GM12878 (cell line): ENCODE measurements at regions of chr16 and their contacts with region 1.

Region 1: DNA sequence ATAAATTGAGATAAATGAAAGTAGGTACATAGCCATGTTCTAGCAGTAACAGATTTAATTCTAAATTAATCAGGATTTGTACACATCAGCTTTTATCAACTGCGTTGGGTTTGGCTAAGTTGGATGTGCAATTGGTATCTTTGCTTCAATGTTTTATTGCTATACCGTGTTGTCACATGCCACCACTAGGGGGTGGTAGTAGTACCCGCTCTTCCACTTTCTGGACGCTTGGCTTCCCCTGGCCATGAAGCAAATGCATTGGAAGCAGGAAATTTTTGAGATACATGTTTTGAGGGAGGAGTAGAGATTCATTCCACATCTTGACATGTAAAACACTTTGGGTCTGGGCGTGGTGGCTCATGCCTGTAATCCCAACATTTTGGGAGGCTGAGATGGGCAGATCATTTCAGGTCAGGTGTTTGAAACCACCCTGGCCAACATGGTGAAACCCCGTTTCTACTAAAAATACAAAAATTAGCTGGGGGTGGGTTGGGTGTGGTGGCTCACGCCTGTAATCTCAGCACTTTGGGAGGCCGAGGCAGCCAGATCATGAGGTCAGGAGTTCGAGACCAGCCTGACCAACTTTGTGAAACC is 58.6 kb downstream of the EMP2 start:
- DNase-seq: no peak
- ATAC-seq: peak; percentile 91
- H3K4me3 ChIP-seq: no peak overlapping the region
- H3K27ac ChIP-seq: no peak overlapping the region
- H3K4me1 ChIP-seq: no peaks in the 10 kb centered on the region
- H3K27me3 ChIP-seq: no peaks in the 10 kb centered on the region
- CTCF ChIP-seq: peak; percentile 78 to 86 (median 81)
- EP300 ChIP-seq: no peak
- POLR2A ChIP-seq: no peak
- RAD21 ChIP-seq: peak; percentile 81

Region 2: GRCh38 chr16:10485698-10486382 is 35.9 kb before region 1 on chr16:
- CTCF ChIA-PET with region 1: no interaction called
- POLR2A ChIA-PET with region 1: no interaction called
- RAD21 ChIA-PET with region 1: no interaction called
- SMC1A ChIA-PET with region 1: no interaction called
- in situ Hi-C with region 1: no loop called
- intact Hi-C with region 1: no loop called
- DNase-seq: no peak
- ATAC-seq: no peak
- H3K4me3 ChIP-seq: no peak overlapping the region
- H3K27ac ChIP-seq: no peak overlapping the region
- H3K4me1 ChIP-seq: no peaks in the 10 kb centered on the region
- H3K27me3 ChIP-seq: no peaks in the 10 kb centered on the region
- CTCF ChIP-seq: no peak
- EP300 ChIP-seq: no peak
- POLR2A ChIP-seq: no peak
- RAD21 ChIP-seq: no peak

Region 3: GRCh38 chr16:10552998-10553491 is 31.3 kb after region 1 on chr16:
- CTCF ChIA-PET with region 1: interaction called, 3 read pairs
- POLR2A ChIA-PET with region 1: no interaction called
- RAD21 ChIA-PET with region 1: no interaction called
- SMC1A ChIA-PET with region 1: interaction called, 11 read pairs
- in situ Hi-C with region 1: no loop called
- intact Hi-C with region 1: no loop called
- DNase-seq: peak; percentile 49
- ATAC-seq: peak; percentile 99
- H3K4me3 ChIP-seq: peak overlapping the region; percentile 49; the same call in 1 of the 2 replicates
- H3K27ac ChIP-seq: peak overlapping the region; percentile 60
- H3K4me1 ChIP-seq: peaks cover 7% of the 10 kb centered on the region
- H3K27me3 ChIP-seq: no peaks in the 10 kb centered on the region; a peak in 1 of 4 replicates
- CTCF ChIP-seq: no peak
- EP300 ChIP-seq: no peak
- POLR2A ChIP-seq: 0 out of 2 replicates have a peak, but pooled peaks have one; percentile 50
- RAD21 ChIP-seq: no peak

Region 4: DNA sequence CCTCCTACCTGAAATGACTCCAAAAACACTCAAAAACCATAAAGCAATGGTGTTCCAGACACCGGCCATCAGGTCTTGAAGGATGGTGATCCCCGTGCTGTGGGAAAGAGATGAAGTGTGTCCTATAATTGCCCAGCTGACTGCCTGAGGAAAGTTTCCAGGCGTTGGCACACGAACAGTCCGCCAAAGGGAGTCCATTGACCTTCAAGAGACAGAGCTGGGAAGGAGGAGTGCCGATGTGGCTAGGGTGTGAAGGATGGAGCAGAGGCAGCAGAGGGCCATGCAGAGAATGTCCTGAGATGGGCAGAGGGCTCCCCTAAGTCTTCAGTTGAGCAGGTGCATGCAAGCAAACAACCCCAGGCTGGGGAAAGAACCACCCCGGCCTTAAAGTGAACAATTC is 210.0 kb after region 1 on chr16:
- CTCF ChIA-PET with region 1: interaction called, 191 read pairs
- POLR2A ChIA-PET with region 1: no interaction called
- RAD21 ChIA-PET with region 1: interaction called, 85 read pairs
- SMC1A ChIA-PET with region 1: interaction called, 104 read pairs
- in situ Hi-C with region 1: no loop called
- intact Hi-C with region 1: no loop called
- DNase-seq: no peak
- ATAC-seq: no peak
- H3K4me3 ChIP-seq: no peak overlapping the region
- H3K27ac ChIP-seq: no peak overlapping the region
- H3K4me1 ChIP-seq: no peaks in the 10 kb centered on the region
- H3K27me3 ChIP-seq: no peaks in the 10 kb centered on the region
- CTCF ChIP-seq: no peak
- EP300 ChIP-seq: no peak
- POLR2A ChIP-seq: no peak
- RAD21 ChIP-seq: no peak

Region 5: DNA sequence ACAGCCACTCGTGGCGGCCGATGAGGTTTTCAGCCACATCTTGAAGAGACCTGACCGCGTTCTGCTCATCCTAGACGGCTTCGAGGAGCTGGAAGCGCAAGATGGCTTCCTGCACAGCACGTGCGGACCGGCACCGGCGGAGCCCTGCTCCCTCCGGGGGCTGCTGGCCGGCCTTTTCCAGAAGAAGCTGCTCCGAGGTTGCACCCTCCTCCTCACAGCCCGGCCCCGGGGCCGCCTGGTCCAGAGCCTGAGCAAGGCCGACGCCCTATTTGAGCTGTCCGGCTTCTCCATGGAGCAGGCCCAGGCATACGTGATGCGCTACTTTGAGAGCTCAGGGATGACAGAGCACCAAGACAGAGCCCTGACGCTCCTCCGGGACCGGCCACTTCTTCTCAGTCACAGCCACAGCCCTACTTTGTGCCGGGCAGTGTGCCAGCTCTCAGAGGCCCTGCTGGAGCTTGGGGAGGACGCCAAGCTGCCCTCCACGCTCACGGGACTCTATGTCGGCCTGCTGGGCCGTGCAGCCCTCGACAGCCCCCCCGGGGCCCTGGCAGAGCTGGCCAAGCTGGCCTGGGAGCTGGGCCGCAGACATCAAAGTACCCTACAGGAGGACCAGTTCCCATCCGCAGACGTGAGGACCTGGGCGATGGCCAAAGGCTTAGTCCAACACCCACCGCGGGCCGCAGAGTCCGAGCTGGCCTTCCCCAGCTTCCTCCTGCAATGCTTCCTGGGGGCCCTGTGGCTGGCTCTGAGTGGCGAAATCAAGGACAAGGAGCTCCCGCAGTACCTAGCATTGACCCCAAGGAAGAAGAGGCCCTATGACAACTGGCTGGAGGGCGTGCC is 385.4 kb after region 1 on chr16:
- CTCF ChIA-PET with region 1: no interaction called
- POLR2A ChIA-PET with region 1: interaction called, 4 read pairs
- RAD21 ChIA-PET with region 1: interaction called, 3 read pairs
- SMC1A ChIA-PET with region 1: no interaction called
- in situ Hi-C with region 1: loop called (anchors 5 kb)
- intact Hi-C with region 1: no loop called
- DNase-seq: no peak
- ATAC-seq: no peak
- H3K4me3 ChIP-seq: no peak overlapping the region
- H3K27ac ChIP-seq: no peak overlapping the region
- H3K4me1 ChIP-seq: peaks cover 7% of the 10 kb centered on the region
- H3K27me3 ChIP-seq: no peaks in the 10 kb centered on the region
- CTCF ChIP-seq: no peak
- EP300 ChIP-seq: no peak
- POLR2A ChIP-seq: no peak
- RAD21 ChIP-seq: no peak

Region 6: DNA sequence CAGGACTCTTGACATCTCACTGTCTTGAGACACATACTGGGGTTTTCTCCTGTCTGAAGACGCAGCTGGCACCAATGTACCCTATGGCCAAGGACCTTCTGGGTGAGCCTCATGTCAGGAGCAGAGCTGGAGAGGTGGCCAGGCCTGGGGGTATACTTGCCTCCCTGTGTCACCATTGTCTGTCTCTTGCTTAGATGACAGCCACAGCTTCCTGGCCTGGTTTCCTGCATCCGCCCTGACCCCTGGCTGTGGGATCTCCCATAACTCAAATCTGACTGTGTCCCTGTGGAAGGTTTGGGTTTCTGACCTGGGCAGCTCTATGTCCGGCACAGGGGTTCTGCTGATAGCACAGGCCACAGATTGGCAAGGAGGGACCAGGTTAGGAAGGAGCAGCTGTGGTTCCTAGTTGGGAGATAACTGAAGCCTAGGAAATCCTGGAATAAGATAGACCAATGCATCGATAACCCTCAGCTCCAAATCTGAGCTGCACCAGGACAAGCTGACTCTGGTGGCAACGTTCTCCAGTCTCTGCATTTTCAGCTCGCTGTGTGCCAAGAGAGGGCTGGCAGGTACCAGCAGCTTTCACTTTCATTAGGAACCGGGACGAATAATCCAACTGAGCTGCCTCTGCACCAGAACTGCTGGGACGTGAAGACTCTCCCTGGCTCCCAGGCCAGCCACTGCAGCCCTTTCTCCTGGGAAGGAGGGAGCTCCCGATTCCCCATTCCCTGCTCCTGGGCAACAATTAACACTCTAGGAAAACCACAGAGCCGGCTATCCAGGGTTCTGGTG is 415.5 kb after region 1 on chr16:
- CTCF ChIA-PET with region 1: no interaction called
- POLR2A ChIA-PET with region 1: no interaction called
- RAD21 ChIA-PET with region 1: interaction called, 3 read pairs
- SMC1A ChIA-PET with region 1: interaction called, 5 read pairs
- in situ Hi-C with region 1: no loop called
- intact Hi-C with region 1: loop called (anchors 5 kb)
- DNase-seq: no peak
- ATAC-seq: peak; percentile 4
- H3K4me3 ChIP-seq: peak overlapping the region; percentile 82; the same call in 1 of the 2 replicates
- H3K27ac ChIP-seq: peak overlapping the region; percentile 23
- H3K4me1 ChIP-seq: peaks cover 42% of the 10 kb centered on the region
- H3K27me3 ChIP-seq: no peaks in the 10 kb centered on the region
- CTCF ChIP-seq: peak in 1 of 3 experiments; percentile 22; a peak in 1 of 6 replicates
- EP300 ChIP-seq: no peak
- POLR2A ChIP-seq: no peak; the same call in 1 of the 2 replicates
- RAD21 ChIP-seq: no peak